PC-9 (cell line): ENCODE measurements at regions of chr16 and their contacts with region 1.

Region 1: DNA sequence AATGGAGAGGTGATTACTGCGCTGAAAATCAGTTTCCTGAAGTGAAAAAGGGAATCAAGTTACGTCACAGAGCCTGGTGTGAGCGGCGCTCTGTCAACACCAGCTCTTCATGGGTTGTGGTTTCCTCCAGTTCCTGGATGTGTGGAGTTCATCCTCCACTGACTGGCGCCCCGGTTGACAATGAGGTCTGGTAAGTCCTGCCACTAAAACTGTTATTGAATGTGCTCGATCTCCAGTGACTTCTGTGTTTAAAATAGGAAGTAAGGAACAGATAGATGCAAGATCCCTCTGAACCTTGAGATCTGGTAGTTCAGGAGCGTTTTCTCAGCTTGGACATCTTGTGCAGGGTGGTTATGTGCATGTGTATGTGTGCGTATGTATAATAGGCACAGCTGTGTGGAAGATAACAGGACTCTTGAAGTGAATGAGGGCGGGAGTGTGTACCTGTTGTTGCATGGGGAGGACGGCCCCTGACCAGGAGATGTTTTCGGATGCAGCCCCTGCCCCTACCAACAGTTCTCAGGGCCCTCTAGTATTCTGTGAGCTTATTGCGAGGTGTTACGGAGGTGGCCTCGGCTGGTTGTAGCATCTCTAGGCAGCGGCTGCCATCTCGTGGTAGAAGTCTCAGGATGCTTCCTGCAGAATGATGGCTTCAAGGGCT is 22.0 kb upstream of the GOT2 start:
- DNase-seq: peak; percentile 50 to 63
- H3K4me3 ChIP-seq: no peak overlapping the region
- H3K27ac ChIP-seq: no peak overlapping the region
- H3K4me1 ChIP-seq: no peaks in the 10 kb centered on the region
- H3K27me3 ChIP-seq: peaks cover 28% of the 10 kb centered on the region; the same call in 1 of the 2 replicates
- CTCF ChIP-seq: peak; percentile 73

Region 2: DNA sequence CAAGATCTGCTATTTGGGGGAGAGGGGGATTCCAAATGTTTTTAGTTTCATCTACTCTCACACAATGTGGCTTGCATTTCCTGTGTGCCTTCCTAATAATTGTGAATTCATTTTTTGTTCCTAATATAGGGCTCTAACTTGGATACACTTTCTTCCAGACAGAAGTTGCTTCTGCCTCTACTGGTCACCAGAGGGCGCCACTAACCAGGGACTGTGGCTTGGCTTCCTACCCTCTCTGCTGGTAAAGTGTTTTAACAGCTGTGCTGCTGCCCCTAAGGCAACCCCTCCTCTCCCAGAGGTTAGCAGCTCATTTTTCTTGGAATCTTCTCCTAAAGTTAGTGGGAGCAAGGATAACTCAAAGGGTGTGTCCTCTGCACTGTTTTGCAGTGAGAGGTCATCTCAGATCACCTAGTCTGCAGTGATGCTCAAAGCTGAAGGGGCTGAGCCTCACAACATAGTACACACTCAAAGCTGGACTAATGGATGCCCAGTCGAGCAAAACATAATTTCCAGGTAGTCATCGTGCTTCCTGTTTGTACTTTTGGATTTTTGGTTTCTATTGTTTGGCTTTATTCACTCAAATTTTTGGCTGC is 456.3 kb before region 1 on chr16:
- CTCF ChIA-PET with region 1: no interaction called
- POLR2A ChIA-PET with region 1: no interaction called
- intact Hi-C with region 1: loop called (anchors 2 kb)
- DNase-seq: peak; percentile 36 to 41
- H3K4me3 ChIP-seq: no peak overlapping the region
- H3K27ac ChIP-seq: no peak overlapping the region
- H3K4me1 ChIP-seq: no peaks in the 10 kb centered on the region
- H3K27me3 ChIP-seq: no peaks in the 10 kb centered on the region
- CTCF ChIP-seq: peak; percentile 91

Region 3: DNA sequence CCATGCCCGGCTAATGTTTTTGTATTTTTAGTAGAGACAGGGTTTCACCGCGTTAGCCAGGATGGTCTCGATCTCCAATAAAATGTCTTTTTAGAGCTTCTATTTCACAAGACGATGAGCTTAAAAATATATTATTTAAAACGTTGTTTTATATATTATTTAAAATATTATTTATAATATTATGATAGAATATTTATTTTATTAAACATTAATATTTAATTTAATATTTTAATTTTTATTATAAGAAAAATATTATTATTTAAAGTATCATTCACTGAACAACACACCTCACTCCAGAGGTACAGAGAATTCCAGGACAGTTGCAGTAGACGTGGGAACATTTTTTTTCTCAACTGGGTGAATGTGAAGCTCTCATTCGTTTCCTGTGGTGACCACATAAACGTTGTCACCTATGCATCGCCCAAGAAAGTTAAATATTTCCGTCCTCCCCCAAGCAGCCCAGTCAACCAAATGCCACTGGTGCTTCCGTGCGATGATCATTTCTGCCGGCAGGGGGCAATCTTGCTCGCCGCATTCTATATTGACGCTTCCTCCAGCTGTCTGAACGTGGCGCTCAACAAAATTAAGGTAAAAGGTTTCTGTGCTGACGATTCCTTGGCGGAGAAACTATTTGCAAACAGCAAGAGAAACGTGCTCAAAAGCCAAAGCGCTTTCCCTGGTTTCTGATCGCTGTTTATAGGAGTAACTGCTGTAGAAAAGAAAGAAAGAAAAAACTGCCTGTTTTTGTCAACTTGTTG is 419.6 kb before region 1 on chr16:
- CTCF ChIA-PET with region 1: no interaction called
- POLR2A ChIA-PET with region 1: no interaction called
- intact Hi-C with region 1: loop called (anchors 10 kb)
- DNase-seq: peak; percentile 77 to 88
- H3K4me3 ChIP-seq: peak overlapping the region; percentile 23; the same call in 1 of the 2 replicates
- H3K27ac ChIP-seq: no peak overlapping the region
- H3K4me1 ChIP-seq: peaks cover 24% of the 10 kb centered on the region
- H3K27me3 ChIP-seq: no peaks in the 10 kb centered on the region
- CTCF ChIP-seq: peak; percentile 93

Region 4: DNA sequence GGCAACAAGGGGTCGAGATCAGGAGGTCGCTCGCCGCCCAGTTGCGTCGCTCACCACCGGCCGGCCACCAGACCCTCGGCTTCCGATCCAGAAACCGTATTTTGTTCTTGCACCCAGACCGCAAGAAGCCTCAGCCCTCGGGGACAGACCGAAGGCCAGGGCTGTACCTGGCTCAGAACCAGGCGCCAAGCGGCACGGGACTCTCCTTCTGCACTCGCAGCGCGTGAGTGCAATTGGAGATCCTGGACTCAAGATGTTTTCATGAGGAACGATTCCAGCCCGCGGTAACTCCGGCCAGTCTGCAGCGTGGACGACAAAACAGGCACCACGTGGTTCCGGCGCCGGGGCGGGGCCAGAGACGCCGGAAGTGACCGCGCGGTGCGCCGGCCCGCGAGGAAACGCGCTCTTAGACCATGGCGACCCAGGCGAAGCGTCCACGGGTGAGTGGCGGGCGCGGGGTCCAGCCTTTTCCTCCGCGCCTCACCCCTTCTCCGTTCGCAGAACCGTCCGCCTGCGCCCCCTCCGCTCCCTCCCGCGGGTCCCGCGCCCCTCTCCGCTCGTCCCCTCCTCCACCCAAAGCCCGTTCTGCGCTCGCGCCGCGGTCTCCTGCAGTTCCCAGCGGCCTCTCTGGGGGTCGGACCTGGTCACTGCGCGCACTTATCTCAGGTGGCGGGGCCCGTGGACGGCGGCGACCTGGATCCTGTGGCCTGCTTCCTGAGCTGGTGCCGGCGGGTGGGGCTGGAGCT is 240.8 kb before region 1 on chr16 and contains the start of gene SETD6:
- CTCF ChIA-PET with region 1: no interaction called
- POLR2A ChIA-PET with region 1: no interaction called
- intact Hi-C with region 1: loop called (anchors 2 kb)
- DNase-seq: peak; percentile 77 to 88
- H3K4me3 ChIP-seq: peak within 1 kb of the TSS; percentile 99
- H3K27ac ChIP-seq: peak within 1 kb of the TSS; percentile 54
- H3K4me1 ChIP-seq: peaks cover 20% of the 10 kb centered on the region
- H3K27me3 ChIP-seq: no peaks in the 10 kb centered on the region
- CTCF ChIP-seq: no peak; the same call in 1 of the 2 replicates
- total RNA-seq, gene SETD6: 19.2 and 21.4 TPM in 2 replicates

Region 5: GRCh38 chr16:58678716-58679115 is 77.4 kb before region 1 on chr16:
- CTCF ChIA-PET with region 1: interaction called, 7 read pairs
- POLR2A ChIA-PET with region 1: no interaction called
- intact Hi-C with region 1: loop called (anchors 2 kb)
- DNase-seq: peak; percentile 10 to 49
- H3K4me3 ChIP-seq: no peak overlapping the region
- H3K27ac ChIP-seq: no peak overlapping the region
- H3K4me1 ChIP-seq: peaks cover 4% of the 10 kb centered on the region; the same call in 1 of the 2 replicates
- H3K27me3 ChIP-seq: no peaks in the 10 kb centered on the region
- CTCF ChIP-seq: no peak; the same call in 1 of the 2 replicates